Caco-2 (cell line): ENCODE measurements at regions of chr10 and their contacts with region 1.

Region 1: GRCh38 chr10:72162978-72163377 is 52.8 kb upstream of the ANAPC16 start:
- DNase-seq: no peak
- H3K4me3 ChIP-seq: no peak overlapping the region
- H3K4me3 Mint-ChIP-seq: no peak overlapping the region
- H3K27ac Mint-ChIP-seq: no peak overlapping the region
- H3K4me1 ChIP-seq: peaks cover 11% of the 10 kb centered on the region
- H3K4me1 Mint-ChIP-seq: peaks cover 11% of the 10 kb centered on the region
- H3K27me3 ChIP-seq: no peaks in the 10 kb centered on the region
- H3K27me3 Mint-ChIP-seq: no peaks in the 10 kb centered on the region
- CTCF ChIP-seq: no peak

Region 2: GRCh38 chr10:72133517-72133916 is 29.5 kb before region 1 on chr10:
- CTCF ChIA-PET with region 1: no interaction called
- POLR2A ChIA-PET with region 1: interaction called, 13 read pairs
- intact Hi-C with region 1: no loop called
- DNase-seq: no peak
- H3K4me3 ChIP-seq: no peak overlapping the region
- H3K4me3 Mint-ChIP-seq: no peak overlapping the region
- H3K27ac Mint-ChIP-seq: no peak overlapping the region
- H3K4me1 ChIP-seq: no peaks in the 10 kb centered on the region
- H3K4me1 Mint-ChIP-seq: peaks cover 14% of the 10 kb centered on the region
- H3K27me3 ChIP-seq: no peaks in the 10 kb centered on the region
- H3K27me3 Mint-ChIP-seq: no peaks in the 10 kb centered on the region
- CTCF ChIP-seq: no peak

Region 3: DNA sequence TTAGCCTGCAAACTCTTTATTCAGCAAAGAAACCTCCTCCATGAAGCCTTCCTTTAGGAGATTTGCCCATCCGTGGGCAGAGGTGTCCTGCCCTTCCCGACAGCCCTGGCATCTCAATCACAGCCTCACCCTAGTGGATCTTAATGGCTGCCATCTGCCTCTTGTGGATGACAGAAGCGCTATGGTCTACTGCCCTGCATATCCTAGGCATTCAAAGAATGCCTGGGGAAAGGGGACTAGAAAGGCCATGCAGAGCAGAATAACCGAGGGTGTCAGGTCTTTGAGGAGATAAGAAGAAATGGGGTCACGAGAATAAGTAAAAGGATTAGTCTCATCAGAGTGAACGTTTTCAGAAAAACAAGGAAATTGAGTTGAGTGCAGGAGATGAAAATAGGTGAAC is 16.9 kb before region 1 on chr10:
- CTCF ChIA-PET with region 1: no interaction called
- POLR2A ChIA-PET with region 1: no interaction called
- intact Hi-C with region 1: no loop called
- DNase-seq: no peak
- H3K4me3 ChIP-seq: no peak overlapping the region
- H3K4me3 Mint-ChIP-seq: no peak overlapping the region
- H3K27ac Mint-ChIP-seq: no peak overlapping the region
- H3K4me1 ChIP-seq: peaks cover 5% of the 10 kb centered on the region; the same call in 1 of the 2 replicates
- H3K4me1 Mint-ChIP-seq: peaks cover 8% of the 10 kb centered on the region
- H3K27me3 ChIP-seq: no peaks in the 10 kb centered on the region
- H3K27me3 Mint-ChIP-seq: no peaks in the 10 kb centered on the region
- CTCF ChIP-seq: no peak

Region 4: GRCh38 chr10:72204296-72204695 is 41.3 kb after region 1 on chr10:
- CTCF ChIA-PET with region 1: no interaction called
- POLR2A ChIA-PET with region 1: no interaction called
- intact Hi-C with region 1: no loop called
- DNase-seq: no peak
- H3K4me3 ChIP-seq: no peak overlapping the region
- H3K4me3 Mint-ChIP-seq: no peak overlapping the region
- H3K27ac Mint-ChIP-seq: no peak overlapping the region
- H3K4me1 ChIP-seq: no peaks in the 10 kb centered on the region
- H3K4me1 Mint-ChIP-seq: no peaks in the 10 kb centered on the region
- H3K27me3 ChIP-seq: no peaks in the 10 kb centered on the region
- H3K27me3 Mint-ChIP-seq: no peaks in the 10 kb centered on the region
- CTCF ChIP-seq: no peak

Region 5: DNA sequence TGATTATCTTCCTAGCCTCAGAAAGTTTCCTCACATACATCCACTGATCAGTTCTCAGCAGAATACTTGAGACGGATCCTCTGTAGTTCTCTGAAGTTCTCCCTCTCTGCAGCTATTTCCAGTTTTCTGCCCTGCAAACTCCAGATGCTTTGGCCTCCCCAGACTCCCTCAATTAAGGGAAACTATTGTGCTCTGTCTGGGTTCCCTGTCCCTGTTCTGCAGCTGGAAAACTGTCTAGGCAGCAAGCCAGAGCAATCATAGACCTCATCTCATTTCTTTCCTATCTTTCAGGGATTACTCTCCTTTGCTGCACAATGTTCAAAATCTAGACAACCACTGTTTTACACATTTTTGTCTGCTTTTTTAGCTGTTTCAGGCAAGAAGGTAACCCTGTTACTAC is 453.7 kb after region 1 on chr10:
- CTCF ChIA-PET with region 1: no interaction called
- POLR2A ChIA-PET with region 1: no interaction called
- intact Hi-C with region 1: no loop called
- DNase-seq: no peak
- H3K4me3 ChIP-seq: no peak overlapping the region
- H3K4me3 Mint-ChIP-seq: no peak overlapping the region
- H3K27ac Mint-ChIP-seq: no peak overlapping the region
- H3K4me1 ChIP-seq: no peaks in the 10 kb centered on the region
- H3K4me1 Mint-ChIP-seq: no peaks in the 10 kb centered on the region
- H3K27me3 ChIP-seq: no peaks in the 10 kb centered on the region
- H3K27me3 Mint-ChIP-seq: no peaks in the 10 kb centered on the region
- CTCF ChIP-seq: no peak